ENCODE measurements at regions of chr5 and their contacts with region 1.

Region 1: DNA sequence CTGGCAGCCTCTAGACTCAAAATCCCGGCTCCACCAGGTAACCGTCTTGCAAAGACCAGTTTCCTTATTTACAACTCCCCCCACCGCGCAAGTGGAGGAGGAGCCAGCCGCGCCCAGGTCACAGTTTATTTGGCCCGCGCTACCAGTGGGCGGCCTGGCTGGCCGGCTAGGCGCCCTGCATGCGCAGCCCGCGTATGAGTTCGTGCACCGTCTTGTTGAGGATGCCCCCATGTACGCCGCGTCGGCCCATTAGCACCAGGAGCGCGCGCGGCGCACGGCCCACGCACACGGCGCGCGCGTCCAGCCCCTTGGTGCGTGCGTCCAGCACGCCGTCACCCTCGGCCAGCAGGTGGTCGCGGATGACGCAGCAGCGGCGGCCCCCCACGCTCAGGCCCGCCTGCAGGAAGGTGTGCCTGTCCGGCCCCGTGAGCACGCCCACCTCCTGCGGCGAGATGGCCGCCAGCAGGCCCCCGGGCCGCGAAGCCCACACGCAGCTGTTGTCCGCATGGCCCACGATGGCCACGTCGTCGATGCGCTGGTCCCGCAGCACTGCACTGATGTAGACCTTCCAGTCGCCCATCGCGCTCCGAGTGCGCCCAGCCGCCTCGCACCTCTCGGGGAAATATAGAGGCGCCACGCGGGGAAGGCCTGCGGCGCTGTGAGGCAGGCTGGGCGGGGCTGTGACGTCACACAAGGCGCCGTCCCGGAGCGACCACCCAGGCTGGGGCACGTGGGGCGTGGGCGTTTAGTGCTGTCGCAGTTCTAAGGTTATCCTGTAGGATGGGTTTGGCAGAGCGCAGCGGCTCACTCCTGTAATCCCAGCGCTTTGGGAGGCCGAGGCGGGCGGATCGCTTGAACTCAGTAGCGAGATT is at the start of gene PFN3:
- DNase-seq: no peak
- ATAC-seq: no peak
- H3K4me3 ChIP-seq: no peak within 1 kb of the TSS
- H3K27ac ChIP-seq: no peak within 1 kb of the TSS
- H3K4me1 ChIP-seq: peaks cover 37% of the 10 kb centered on the region
- H3K27me3 ChIP-seq: peaks cover 0 to 18% of the 10 kb centered on the region in 2 donors
- CTCF ChIP-seq: no peak
- POLR2A ChIP-seq: no peak
- total RNA-seq, gene PFN3: not detected

Region 2: GRCh38 chr5:177454397-177455035 is 54.3 kb after region 1 on chr5:
- intact Hi-C with region 1: loop called (anchors 5 kb)
- DNase-seq: peak; percentile 92 to 96 (median 94)
- ATAC-seq: peak; percentile 77
- H3K4me3 ChIP-seq: peak overlapping the region in 1 of 2 donors; percentile 17
- H3K27ac ChIP-seq: peak overlapping the region; percentile 78 to 88 (median 85)
- H3K4me1 ChIP-seq: peaks cover 19% of the 10 kb centered on the region
- H3K27me3 ChIP-seq: no peaks in the 10 kb centered on the region
- CTCF ChIP-seq: peak; percentile 88 to 99 (median 96)
- POLR2A ChIP-seq: no peak